ENCODE measurements at regions of chr16 and their contacts with region 1.

Region 1: GRCh38 chr16:1300664-1301476 is 8.6 kb upstream of the UBE2I start:
- DNase-seq: peak; percentile 62 to 77 (median 69)
- H3K4me3 ChIP-seq: no peak overlapping the region
- H3K4me3 Mint-ChIP-seq: no peak overlapping the region
- H3K27ac ChIP-seq: no peak overlapping the region
- H3K27ac Mint-ChIP-seq: no peak overlapping the region
- H3K4me1 ChIP-seq: peaks cover 26% of the 10 kb centered on the region
- H3K4me1 Mint-ChIP-seq: peaks cover 4 to 25% (median 16%) of the 10 kb centered on the region in 4 donors
- H3K27me3 ChIP-seq: no peaks in the 10 kb centered on the region
- H3K27me3 Mint-ChIP-seq: peaks cover 4 to 5% of the 10 kb centered on the region in 2 donors

Region 2: GRCh38 chr16:1342526-1343427 is 41.9 kb after region 1 on chr16:
- CTCF ChIA-PET with region 1: interaction called, 5 read pairs
- POLR2A ChIA-PET with region 1: no interaction called
- intact Hi-C with region 1: loop called (anchors 2 kb)
- DNase-seq: peak; percentile 93 to 99 (median 96)
- H3K4me3 ChIP-seq: peak overlapping the region in 1 of 2 donors; percentile 63
- H3K4me3 Mint-ChIP-seq: peak overlapping the region; percentile 66 to 83 (median 79)
- H3K27ac ChIP-seq: peak overlapping the region; percentile 15
- H3K27ac Mint-ChIP-seq: peak overlapping the region; percentile 7 to 85 (median 59)
- H3K4me1 ChIP-seq: peaks cover 19% of the 10 kb centered on the region
- H3K4me1 Mint-ChIP-seq: peaks cover 6 to 22% (median 15%) of the 10 kb centered on the region in 4 donors
- H3K27me3 ChIP-seq: no peaks in the 10 kb centered on the region
- H3K27me3 Mint-ChIP-seq: no peaks in the 10 kb centered on the region

Region 3: GRCh38 chr16:1374418-1375297 is 73.8 kb after region 1 on chr16:
- CTCF ChIA-PET with region 1: no interaction called
- POLR2A ChIA-PET with region 1: no interaction called
- intact Hi-C with region 1: loop called (anchors 2 kb)
- DNase-seq: no peak
- H3K4me3 ChIP-seq: no peak overlapping the region
- H3K4me3 Mint-ChIP-seq: no peak overlapping the region
- H3K27ac ChIP-seq: no peak overlapping the region
- H3K27ac Mint-ChIP-seq: no peak overlapping the region
- H3K4me1 ChIP-seq: peaks cover 9% of the 10 kb centered on the region
- H3K4me1 Mint-ChIP-seq: peaks cover 4 to 14% (median 6%) of the 10 kb centered on the region in 4 donors
- H3K27me3 ChIP-seq: no peaks in the 10 kb centered on the region
- H3K27me3 Mint-ChIP-seq: no peaks in the 10 kb centered on the region

Region 4: DNA sequence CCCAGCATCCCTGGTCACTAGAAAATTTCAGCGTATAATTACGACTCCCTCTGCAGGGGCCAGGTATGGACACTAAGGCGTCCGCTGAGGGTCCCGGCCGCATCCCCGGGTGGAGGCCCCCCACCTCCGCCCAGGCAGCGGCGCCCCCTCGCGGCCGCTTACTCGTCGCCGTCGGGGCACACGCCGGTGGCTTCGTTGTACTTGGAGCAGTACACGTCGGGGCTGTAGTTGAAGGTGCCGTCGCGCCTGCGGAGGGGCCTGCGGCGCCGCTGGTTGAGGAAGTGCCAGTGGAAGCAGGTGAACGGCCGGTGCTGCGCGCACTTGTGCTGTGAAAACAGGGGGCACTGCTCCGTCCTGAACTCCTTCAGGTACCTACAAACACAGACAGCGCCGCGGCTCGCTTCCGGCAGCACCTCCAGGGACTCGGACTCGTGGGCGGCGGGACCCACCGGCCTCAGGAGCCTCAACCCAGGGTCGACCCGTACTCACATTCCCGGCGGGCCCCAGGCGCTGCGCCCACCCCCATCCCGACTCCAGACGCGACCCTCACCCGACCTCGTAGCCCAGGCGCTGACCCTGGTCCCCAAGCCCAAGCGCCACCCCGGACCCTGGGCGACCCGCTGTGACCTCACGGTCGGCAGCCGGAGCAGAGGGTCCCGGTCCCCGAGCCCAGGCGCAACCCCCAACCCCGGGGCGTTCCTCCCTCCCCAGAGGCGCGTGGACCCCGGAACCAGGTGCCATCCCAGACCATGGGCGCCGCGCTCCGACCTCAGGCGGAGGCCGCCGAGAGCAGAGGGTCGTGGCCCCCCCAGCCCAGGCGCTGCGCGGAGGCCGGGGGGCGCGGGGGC is 113.0 kb after region 1 on chr16:
- CTCF ChIA-PET with region 1: interaction called, 3 read pairs
- POLR2A ChIA-PET with region 1: no interaction called
- intact Hi-C with region 1: loop called (anchors 2 kb)
- DNase-seq: peak; percentile 52 to 74 (median 59)
- H3K4me3 ChIP-seq: peak overlapping the region in 1 of 2 donors; percentile 75
- H3K4me3 Mint-ChIP-seq: peak overlapping the region; percentile 78 to 89 (median 85)
- H3K27ac ChIP-seq: peak overlapping the region; percentile 68
- H3K27ac Mint-ChIP-seq: peak overlapping the region; percentile 80 to 91 (median 88)
- H3K4me1 ChIP-seq: peaks cover 20% of the 10 kb centered on the region
- H3K4me1 Mint-ChIP-seq: peaks cover 2 to 31% (median 18%) of the 10 kb centered on the region in 4 donors
- H3K27me3 ChIP-seq: no peaks in the 10 kb centered on the region
- H3K27me3 Mint-ChIP-seq: no peaks in the 10 kb centered on the region

Measured in CD4-positive, alpha-beta memory T cell (primary cell).